Aorta (tissue), 5 donors: ENCODE measurements at regions of chr6 and their contacts with region 1.

Region 1: DNA sequence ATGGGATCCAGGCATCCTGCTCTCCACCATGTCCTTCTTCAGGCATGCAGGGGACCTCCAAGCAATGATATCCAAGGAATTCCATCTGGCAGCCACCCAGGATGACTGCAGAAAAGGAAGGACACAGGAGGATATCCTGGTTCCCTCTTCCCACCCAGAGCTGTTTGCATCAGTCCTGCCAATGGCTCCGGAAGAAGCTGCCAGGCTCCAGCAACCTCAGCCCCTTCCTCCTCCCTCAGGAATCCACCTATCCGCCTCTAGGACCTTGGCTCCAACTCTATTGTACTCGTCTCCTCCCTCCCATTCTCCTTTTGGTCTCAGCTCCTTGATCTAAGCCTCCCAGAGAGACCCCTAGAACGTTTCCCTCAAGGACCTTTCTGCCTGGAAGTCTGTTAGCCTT is 733 bp upstream of the PSORS1C2 start:
- DNase-seq: no peak
- ATAC-seq: no peak
- H3K4me3 ChIP-seq: no peak overlapping the region
- H3K27ac ChIP-seq: no peak overlapping the region
- H3K4me1 ChIP-seq: no peaks in the 10 kb centered on the region
- H3K27me3 ChIP-seq: no peaks in the 10 kb centered on the region

Region 2: DNA sequence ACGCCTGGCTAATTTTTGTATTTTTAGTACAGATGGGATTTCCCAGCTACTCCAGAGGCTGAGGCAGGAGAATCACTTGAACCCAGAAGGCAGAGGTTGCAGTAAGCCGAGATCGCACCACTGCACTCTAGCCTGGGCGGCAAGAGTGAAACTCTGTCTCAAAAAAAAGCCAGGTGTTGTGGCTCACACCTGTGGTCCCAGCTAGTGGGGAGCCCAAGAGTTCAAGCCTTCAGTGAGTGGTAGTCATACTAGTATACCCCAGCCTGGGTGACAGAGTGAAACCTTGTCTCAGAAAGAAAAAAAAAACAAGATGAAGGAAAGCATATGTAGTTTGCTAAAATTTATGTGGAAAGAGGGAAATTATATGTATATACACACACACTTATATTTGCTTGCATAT is 50.9 kb after region 1 on chr6:
- intact Hi-C with region 1: loop called (anchors 1 to 2 kb)
- DNase-seq: no peak
- ATAC-seq: no peak
- H3K4me3 ChIP-seq: no peak overlapping the region
- H3K27ac ChIP-seq: no peak overlapping the region
- H3K4me1 ChIP-seq: no peaks in the 10 kb centered on the region
- H3K27me3 ChIP-seq: no peaks in the 10 kb centered on the region

Region 3: DNA sequence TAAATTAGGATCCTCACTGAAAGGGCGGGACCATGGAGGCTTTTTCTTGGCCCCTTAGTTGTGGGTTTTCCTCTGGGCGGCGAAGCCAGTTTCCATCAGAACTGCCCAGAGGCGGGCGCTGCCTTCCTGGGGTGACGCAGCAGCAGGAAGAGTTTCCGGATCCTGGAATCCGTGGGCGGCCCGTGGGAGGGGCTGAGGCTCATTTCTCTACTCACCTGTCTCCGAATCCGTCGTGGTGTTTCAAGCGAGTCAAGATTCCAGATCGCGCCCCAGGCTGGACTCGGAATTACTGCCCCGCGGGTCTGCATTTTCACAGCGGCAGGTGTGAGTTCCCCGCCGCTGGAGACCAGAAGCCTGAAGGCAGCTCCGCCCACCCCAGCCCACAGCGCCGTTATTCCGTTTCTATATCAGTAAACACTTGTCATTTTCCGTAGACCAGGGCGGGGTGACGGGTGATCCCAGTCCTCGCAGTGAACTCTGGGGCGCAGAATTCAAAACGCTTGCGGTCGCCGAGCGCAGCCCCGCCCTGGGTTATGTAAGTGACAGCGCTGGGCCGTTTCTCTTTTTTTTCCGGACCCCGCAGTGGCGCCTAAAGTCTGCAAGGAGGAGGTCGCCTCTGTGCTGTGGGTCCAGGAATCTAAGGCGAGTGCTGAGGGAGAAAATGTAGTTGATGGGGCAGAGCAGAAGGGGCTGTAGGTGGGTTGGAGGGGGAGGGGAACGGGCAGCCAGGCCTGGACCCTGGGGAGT is 58.1 kb after region 1 on chr6:
- intact Hi-C with region 1: loop called in 1 of 2 experiments (anchors 1 kb)
- DNase-seq: peak; percentile 96
- ATAC-seq: peak; percentile 94
- H3K4me3 ChIP-seq: peak overlapping the region; percentile 57 to 77
- H3K27ac ChIP-seq: peak overlapping the region; percentile 59 to 78
- H3K4me1 ChIP-seq: no peaks in the 10 kb centered on the region
- H3K27me3 ChIP-seq: no peaks in the 10 kb centered on the region

Region 4: GRCh38 chr6:31366693-31367470 is 227.3 kb after region 1 on chr6:
- intact Hi-C with region 1: loop called (anchors 1 to 2 kb)
- DNase-seq: peak; percentile 89 to 97
- ATAC-seq: peak; percentile 96
- H3K4me3 ChIP-seq: no peak overlapping the region
- H3K27ac ChIP-seq: no peak overlapping the region
- H3K4me1 ChIP-seq: no peaks in the 10 kb centered on the region
- H3K27me3 ChIP-seq: no peaks in the 10 kb centered on the region